Activated CD4-positive, alpha-beta T cell treated with anti-CD3 and anti-CD28 coated beads, Interleukin-2, amount 10 ng/mL, durations not matched to agents 24 days and 14 days (primary cell): ENCODE measurements at regions of chrX and their contacts with region 1.

Region 1: DNA sequence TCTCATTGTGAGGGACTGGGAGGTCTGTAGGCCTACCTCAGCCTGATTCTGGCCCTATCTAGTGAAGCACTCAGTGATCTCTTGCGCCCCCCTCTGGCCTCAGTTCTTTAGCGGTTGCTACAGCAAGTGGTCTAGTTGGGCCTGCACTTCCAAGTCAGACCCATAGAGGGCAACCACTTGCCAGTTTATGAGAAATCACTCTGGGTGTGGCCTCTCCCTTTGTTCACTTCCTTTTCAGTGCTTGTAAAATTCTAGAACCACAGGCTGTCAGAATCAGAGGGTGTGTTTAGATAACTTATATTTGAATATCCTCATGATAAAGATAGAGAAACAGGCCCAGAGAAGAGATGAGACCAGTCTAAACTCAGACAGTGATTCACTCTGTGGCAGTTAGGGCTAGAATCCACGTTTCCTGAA is 60.9 kb upstream of the LAS1L start:
- DNase-seq: peak; percentile 96
- H3K4me3 Mint-ChIP-seq: peak overlapping the region; percentile 69
- H3K27ac Mint-ChIP-seq: peak overlapping the region; percentile 98
- H3K4me1 Mint-ChIP-seq: peaks cover 41% of the 10 kb centered on the region
- H3K27me3 Mint-ChIP-seq: no peaks in the 10 kb centered on the region

Region 2: DNA sequence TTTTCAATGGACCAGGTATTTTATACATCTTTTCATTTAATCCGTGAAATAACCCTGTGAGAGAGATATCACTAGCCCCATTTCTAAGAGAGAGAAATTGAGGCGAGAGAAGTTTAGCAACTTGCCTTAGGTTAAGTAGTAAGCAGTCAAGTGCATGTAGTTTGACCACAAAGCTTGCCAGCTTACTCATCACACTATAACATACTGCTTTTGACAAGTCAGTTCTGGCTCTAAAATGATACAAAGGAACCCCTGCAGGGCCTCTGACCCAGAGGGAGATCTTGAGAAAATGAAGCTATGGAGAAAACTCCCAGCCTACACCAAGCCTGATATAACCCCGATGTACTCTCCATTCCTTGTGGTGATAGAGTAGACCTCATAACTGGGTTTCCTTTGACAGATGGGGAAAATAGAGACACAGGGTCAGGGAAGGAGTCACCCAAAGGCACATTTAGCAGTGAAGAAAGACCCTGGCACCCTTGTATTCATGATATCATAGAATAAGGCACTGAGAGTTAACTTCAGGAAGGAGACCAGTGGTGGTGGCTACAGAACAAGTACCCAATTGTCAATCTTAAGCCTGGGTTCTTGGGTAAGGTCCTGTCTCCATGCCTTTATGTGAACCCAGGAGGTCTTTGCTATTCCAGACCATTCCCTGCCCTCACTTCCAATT is 11.7 kb after region 1 on chrX:
- intact Hi-C with region 1: loop called (anchors 1 kb)
- DNase-seq: peak; percentile 70
- H3K4me3 Mint-ChIP-seq: peak overlapping the region; percentile 37
- H3K27ac Mint-ChIP-seq: peak overlapping the region; percentile 80
- H3K4me1 Mint-ChIP-seq: peaks cover 37% of the 10 kb centered on the region
- H3K27me3 Mint-ChIP-seq: no peaks in the 10 kb centered on the region

Region 3: DNA sequence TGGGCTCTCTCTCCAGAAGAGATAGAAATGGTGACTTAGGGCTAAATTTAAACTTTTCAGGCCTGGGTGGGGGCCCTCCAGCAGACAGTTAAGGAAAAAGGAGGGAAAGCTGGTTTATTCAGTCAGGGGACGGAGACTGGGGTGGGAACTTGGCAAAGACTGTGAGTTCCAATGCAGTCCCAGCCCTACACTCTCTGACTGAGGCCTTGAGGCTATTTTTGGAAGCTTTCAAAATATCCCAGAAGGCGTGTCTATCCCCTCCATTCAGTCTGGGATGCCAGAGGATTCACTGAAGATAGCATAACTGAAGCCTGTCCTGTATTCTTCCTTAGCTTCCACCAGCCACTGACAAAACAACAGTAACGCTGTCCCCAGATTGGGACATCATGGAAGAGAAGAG is 39.9 kb after region 1 on chrX:
- intact Hi-C with region 1: no loop called
- DNase-seq: no peak
- H3K4me3 Mint-ChIP-seq: no peak overlapping the region
- H3K27ac Mint-ChIP-seq: no peak overlapping the region
- H3K4me1 Mint-ChIP-seq: no peaks in the 10 kb centered on the region
- H3K27me3 Mint-ChIP-seq: no peaks in the 10 kb centered on the region

Region 4: DNA sequence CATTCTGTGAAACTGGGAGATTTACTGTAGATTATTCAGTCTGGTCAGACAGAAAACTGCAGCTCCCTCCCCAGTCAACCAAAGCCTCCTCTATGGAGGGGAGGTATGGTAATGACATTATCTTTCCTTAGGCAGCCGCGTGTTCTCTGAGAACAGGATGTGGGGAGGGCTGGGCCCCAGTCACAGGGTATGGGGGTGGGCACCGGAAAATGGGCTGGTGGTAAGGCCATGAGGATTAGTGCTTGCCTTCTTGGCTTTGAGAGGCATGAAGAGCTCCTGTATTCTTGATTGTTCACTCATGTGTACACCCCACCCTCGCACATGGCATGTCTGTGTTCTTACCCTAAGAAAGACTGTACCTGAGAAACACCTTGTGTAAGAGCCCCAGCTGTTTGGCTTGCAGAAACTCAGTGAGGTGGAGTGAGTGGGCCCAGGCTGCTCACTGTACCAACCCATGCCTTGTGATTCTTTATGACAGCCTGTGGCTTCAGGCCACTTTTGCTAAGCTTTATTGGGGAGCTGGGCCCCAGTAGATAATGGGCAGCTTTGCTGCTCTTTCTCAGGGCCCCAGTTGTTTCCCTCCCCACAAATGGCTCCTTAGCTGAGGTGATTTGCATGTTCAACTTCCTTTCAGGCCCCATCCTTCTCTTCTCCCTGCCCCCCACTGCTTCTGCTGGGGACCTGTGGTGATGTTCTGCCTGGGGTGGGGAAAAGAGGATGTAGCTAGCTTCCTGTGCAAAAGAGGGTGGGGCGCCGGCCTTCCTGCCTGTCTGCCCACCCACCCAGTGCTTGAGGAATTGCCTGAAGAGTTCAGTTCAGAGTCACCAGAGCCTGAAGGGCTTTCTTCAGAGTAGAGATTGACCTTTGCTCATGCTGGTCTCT is 102.7 kb after region 1 on chrX:
- intact Hi-C with region 1: loop called (anchors 1 kb)
- DNase-seq: peak; percentile 91
- H3K4me3 Mint-ChIP-seq: peak overlapping the region; percentile 77
- H3K27ac Mint-ChIP-seq: peak overlapping the region; percentile 96
- H3K4me1 Mint-ChIP-seq: peaks cover 60% of the 10 kb centered on the region
- H3K27me3 Mint-ChIP-seq: no peaks in the 10 kb centered on the region

Region 5: DNA sequence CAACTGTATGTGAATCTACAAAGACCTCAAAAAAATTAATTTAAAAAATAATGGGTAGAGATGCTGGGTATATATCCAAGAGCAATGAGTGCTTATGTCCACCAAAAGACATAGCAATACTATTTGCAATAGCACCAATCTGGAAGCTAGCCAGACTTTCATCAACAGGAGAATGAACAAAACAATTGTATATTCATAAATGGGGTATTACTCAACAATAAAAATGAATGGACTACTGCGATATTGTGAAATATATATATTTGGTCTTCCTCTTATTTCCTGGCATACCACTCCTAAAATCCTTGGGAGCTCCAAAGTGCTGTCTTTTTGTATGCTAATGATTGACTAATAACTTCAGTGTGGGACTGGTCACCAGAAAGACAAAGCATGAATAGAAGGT is 149.5 kb after region 1 on chrX:
- intact Hi-C with region 1: loop called (anchors 5 kb)
- DNase-seq: no peak
- H3K4me3 Mint-ChIP-seq: no peak overlapping the region
- H3K27ac Mint-ChIP-seq: no peak overlapping the region
- H3K4me1 Mint-ChIP-seq: peaks cover 36% of the 10 kb centered on the region
- H3K27me3 Mint-ChIP-seq: no peaks in the 10 kb centered on the region

Region 6: DNA sequence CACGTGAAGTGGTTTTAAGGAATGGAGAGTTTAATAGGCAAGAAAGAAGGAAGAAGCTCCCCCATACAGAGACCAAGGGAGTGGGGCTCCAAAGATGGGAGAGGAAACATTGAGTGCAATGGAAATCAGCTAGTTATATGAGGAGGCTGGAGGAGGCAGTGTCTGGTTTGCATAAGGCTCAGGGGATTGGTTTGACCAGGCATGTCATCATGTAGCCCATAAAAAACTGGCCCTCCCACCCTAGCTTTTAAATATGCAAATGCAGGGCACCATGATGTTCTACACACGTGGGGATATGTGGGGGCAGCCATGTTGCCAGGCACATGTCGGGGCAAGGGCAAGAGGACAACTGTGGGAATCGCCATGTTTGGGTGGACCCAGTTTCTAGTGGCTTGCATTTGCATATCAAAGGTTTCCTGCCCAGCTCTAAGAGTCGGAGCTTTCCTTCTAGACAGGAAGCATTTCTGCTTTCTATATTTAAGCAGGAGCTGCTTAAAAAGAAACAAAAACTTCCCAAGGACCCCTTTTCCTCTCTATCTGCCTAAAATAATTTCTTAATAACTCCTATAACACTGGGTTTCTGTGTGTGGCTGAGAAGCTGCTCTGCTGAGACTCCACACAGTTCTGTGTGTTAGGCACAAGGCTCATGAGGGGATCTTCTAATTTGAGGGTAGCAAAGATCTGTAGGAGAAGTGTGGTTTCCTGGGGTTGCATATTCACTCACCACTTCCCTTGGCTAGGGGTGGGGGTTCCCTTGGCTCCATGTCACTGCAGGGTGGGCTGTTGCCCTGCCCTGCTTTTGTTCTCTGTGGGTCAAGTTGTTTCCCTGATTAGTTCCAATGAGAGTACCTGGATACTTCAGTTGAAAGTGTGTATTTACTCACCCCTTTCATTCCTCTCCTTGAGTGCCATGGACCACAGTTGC is 330.9 kb after region 1 on chrX:
- intact Hi-C with region 1: loop called (anchors 5 kb)
- DNase-seq: peak; percentile 85
- H3K4me3 Mint-ChIP-seq: peak overlapping the region; percentile 48
- H3K27ac Mint-ChIP-seq: peak overlapping the region; percentile 93
- H3K4me1 Mint-ChIP-seq: peaks cover 37% of the 10 kb centered on the region
- H3K27me3 Mint-ChIP-seq: no peaks in the 10 kb centered on the region

Region 7: DNA sequence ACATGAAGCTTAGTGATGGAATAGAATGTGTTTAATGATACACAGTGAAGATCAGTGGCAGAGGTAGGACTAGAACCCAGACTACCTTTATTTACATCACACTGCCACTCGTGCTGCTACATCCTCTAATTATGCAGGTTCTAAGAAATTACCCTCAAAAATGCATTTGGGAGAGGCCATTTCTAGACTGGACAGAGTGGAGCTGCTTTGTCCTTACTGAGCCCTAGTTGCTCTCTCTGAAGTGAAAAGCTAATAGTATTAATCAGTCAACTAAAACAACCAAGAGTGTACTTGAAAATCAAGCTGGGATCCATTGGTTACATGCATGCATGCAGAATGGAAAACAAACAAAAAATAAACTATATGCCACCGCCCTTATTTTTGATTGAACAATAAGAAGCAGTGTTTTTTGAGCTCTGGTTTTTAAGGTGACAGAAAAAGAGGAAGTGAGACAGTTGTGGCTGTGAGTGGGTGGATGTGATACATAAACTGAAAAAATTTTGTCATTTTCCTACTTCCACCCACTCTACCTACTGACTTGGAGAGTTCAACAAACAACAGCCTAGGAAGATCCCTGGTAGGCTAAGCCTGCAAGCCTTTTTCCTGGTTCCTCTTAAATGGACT is 451.3 kb after region 1 on chrX:
- intact Hi-C with region 1: loop called (anchors 1 kb)
- DNase-seq: peak; percentile 69
- H3K4me3 Mint-ChIP-seq: peak overlapping the region; percentile 74
- H3K27ac Mint-ChIP-seq: peak overlapping the region; percentile 99
- H3K4me1 Mint-ChIP-seq: peaks cover 33% of the 10 kb centered on the region
- H3K27me3 Mint-ChIP-seq: no peaks in the 10 kb centered on the region

Region 8: DNA sequence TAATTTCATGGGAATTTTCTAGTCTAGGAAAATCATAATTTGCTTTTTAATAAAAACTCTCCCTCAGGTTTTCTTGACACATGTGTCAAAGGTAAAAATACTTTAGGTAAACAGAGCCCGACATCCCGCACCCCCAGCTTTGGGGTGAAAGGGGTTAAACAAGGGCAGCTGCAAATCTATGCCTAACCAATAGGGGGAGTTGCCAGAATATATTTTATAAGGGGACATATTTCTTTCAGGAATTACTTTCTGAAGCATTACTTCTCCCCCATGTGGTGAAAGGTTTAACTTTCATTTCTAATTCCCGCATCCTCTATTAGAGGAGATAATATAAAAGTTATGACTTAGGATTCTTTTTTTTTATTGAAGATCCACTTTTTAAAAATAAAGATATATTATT is 514.6 kb after region 1 on chrX:
- intact Hi-C with region 1: no loop called
- DNase-seq: no peak
- H3K4me3 Mint-ChIP-seq: no peak overlapping the region
- H3K27ac Mint-ChIP-seq: no peak overlapping the region
- H3K4me1 Mint-ChIP-seq: peaks cover 4% of the 10 kb centered on the region
- H3K27me3 Mint-ChIP-seq: no peaks in the 10 kb centered on the region

Region 9: DNA sequence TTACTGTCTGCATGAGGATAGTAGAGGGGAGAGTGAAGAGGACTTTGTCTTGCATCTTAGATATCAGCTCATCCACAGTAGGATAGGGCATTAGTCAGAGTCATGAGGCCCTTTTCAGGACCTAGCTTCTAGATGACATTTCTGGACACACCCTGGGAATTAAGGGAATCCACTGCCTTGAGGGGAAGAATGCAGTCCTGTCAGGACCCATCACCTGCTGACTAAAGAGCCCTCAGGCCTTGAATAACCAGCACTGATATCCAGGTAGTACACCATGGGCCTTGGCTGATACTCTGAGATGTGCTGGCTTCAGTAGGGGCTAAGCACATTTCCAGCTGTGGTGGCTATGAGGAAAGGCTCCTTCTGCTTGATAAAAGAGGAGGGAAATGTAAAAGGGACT is 909.0 kb after region 1 on chrX:
- intact Hi-C with region 1: no loop called
- DNase-seq: no peak
- H3K4me3 Mint-ChIP-seq: no peak overlapping the region
- H3K27ac Mint-ChIP-seq: no peak overlapping the region
- H3K4me1 Mint-ChIP-seq: no peaks in the 10 kb centered on the region
- H3K27me3 Mint-ChIP-seq: no peaks in the 10 kb centered on the region